ENCODE measurements at regions of chr1 and their contacts with region 1.

Region 1: GRCh38 chr1:232630047-232630893 is at the start of gene SIPA1L2:
- DNase-seq: peak in 2 of 4 experiments; percentile 9 to 23
- ATAC-seq: no peak; the same call in 2 of the 3 replicates
- H3K4me3 ChIP-seq: no peak within 1 kb of the TSS
- H3K27ac ChIP-seq: no peak within 1 kb of the TSS
- H3K4me1 ChIP-seq: no peaks in the 10 kb centered on the region
- H3K27me3 ChIP-seq: peaks cover 0 to 3% of the 10 kb centered on the region in 2 experiments; a peak in 2 of 5 replicates
- CTCF ChIP-seq: peak in 1 of 3 experiments; percentile 29; a peak in 2 of 6 replicates
- EP300 ChIP-seq: no peak
- POLR2A ChIP-seq: no peak
- RAD21 ChIP-seq: peak in 1 of 2 experiments; percentile 24; a peak in 2 of 4 replicates
- polyA plus RNA-seq, gene SIPA1L2: not detected

Region 2: DNA sequence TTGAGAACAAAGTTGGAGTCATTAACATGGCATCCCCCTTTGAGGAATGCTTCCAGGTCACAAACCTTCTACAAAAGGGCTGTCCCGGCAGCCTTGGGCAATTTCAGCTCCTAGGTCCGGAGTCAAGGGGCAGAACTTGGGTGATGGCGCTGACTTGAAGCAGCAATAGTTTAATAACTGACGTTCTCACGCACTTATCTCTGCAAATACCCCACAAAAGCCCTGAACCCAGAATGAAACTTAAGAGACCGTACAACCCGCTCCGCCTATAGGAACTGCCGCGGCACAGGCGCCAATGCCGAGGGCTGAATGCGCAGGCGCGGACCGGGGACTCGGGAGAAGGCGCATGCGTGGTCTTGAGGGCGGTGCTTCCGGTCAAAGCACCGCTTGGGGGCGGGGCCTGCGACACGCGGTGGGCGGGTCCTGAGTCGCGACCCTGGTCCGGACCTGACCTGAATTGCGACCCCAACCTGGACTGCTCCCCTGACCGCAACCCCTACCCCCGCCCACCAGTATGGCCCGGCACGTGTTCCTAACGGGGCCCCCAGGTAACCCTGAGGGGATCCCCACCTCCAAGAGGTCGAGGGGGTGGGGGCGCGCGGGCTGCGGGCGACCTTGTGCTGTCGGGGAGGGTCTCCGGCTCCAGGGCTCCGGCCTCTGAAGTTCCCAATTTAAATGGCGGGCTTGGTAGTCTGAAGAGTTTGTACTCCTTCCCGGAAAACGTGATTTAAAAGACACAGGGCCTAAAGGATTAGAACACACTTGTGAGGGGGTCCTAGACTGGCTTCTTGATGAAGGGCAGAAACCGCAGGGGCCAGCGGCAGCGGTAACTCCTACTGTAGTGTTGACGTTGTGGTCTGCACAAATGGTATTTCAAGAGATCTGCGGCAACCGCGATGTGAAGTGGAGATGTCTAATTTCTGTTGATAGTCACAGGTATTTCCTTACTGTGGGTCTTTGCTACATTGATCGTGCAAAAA is 320.2 kb after region 1 on chr1 and contains the start of gene NTPCR:
- CTCF ChIA-PET with region 1: interaction called, 3 read pairs
- POLR2A ChIA-PET with region 1: no interaction called
- in situ Hi-C with region 1: no loop called
- intact Hi-C with region 1: loop called (anchors 10 kb)
- DNase-seq: peak; percentile 97 to 100 (median 100)
- ATAC-seq: peak; percentile 94
- H3K4me3 ChIP-seq: peak within 1 kb of the TSS; percentile 88
- H3K27ac ChIP-seq: peak within 1 kb of the TSS; percentile 68
- H3K4me1 ChIP-seq: peaks cover 9 to 10% of the 10 kb centered on the region in 2 experiments; a peak in 3 of 5 replicates
- H3K27me3 ChIP-seq: no peaks in the 10 kb centered on the region
- CTCF ChIP-seq: no peak
- EP300 ChIP-seq: no peak
- POLR2A ChIP-seq: peak; percentile 91
- RAD21 ChIP-seq: no peak
- polyA plus RNA-seq, gene NTPCR: 101 to 105 TPM

Region 3: GRCh38 chr1:233025157-233025915 is 395.1 kb after region 1 on chr1:
- CTCF ChIA-PET with region 1: no interaction called
- POLR2A ChIA-PET with region 1: no interaction called
- in situ Hi-C with region 1: no loop called
- intact Hi-C with region 1: loop called (anchors 10 kb)
- DNase-seq: peak in 2 of 4 experiments; percentile 39 to 46
- ATAC-seq: peak; percentile 79
- H3K4me3 ChIP-seq: no peak overlapping the region
- H3K27ac ChIP-seq: no peak overlapping the region
- H3K4me1 ChIP-seq: no peaks in the 10 kb centered on the region
- H3K27me3 ChIP-seq: peaks cover under 1 to 32% of the 10 kb centered on the region in 2 experiments; a peak in 3 of 5 replicates
- CTCF ChIP-seq: peak; percentile 43 to 60 (median 49); a peak in 5 of 6 replicates
- EP300 ChIP-seq: no peak
- POLR2A ChIP-seq: no peak
- RAD21 ChIP-seq: peak; percentile 75

Region 4: GRCh38 chr1:233121947-233122559 is 491.8 kb after region 1 on chr1:
- CTCF ChIA-PET with region 1: no interaction called
- POLR2A ChIA-PET with region 1: no interaction called
- in situ Hi-C with region 1: no loop called
- intact Hi-C with region 1: no loop called
- DNase-seq: no peak
- ATAC-seq: no peak
- H3K4me3 ChIP-seq: no peak overlapping the region
- H3K27ac ChIP-seq: no peak overlapping the region
- H3K4me1 ChIP-seq: no peaks in the 10 kb centered on the region
- H3K27me3 ChIP-seq: no peaks in the 10 kb centered on the region; a peak in 2 of 5 replicates
- CTCF ChIP-seq: no peak
- EP300 ChIP-seq: no peak
- POLR2A ChIP-seq: no peak
- RAD21 ChIP-seq: no peak

Measured in K562 (cell line).